Mammary epithelial cell (primary cell): ENCODE measurements at regions of chr2 and their contacts with region 1.

Region 1: DNA sequence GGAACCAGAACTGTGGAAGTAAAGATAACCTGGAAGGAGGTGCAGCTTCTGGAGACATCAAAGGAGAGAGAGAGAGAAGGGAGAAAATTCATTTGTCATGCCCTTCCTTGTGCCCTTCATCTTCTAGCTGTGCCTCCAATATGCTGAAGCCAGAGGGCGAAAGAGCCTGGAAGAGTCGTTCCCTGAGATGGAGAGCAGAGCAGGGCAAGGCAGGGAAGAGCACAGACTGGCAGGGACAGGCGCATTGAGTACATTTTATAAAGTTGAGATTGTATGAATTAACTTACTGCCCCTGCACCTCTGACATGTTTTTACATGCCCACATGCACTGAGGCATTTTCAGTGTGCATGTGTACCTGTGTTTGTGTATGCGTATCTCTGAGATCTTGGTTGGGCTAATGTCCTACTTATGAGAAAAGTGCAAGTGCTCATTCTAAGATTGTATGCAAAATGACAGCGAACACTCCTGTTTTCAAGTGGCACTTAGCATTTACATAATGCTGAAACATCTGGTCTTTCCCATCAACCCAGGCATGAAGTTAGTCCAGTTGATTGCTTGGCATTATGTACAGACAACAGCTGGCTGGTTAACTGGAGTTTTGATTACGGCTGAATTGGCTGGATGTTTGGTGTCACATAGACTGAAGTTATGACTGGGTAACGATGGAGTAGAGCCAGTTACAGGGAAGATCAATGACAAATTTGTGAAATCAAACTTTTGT is 23.7 kb upstream of the MMADHC start:
- DNase-seq: peak; percentile 20
- H3K4me3 ChIP-seq: no peak overlapping the region
- H3K27ac ChIP-seq: no peak overlapping the region
- H3K4me1 ChIP-seq: peaks cover 15% of the 10 kb centered on the region
- H3K27me3 ChIP-seq: no peaks in the 10 kb centered on the region
- CTCF ChIP-seq: peak in 1 of 2 donors; percentile 49

Region 2: DNA sequence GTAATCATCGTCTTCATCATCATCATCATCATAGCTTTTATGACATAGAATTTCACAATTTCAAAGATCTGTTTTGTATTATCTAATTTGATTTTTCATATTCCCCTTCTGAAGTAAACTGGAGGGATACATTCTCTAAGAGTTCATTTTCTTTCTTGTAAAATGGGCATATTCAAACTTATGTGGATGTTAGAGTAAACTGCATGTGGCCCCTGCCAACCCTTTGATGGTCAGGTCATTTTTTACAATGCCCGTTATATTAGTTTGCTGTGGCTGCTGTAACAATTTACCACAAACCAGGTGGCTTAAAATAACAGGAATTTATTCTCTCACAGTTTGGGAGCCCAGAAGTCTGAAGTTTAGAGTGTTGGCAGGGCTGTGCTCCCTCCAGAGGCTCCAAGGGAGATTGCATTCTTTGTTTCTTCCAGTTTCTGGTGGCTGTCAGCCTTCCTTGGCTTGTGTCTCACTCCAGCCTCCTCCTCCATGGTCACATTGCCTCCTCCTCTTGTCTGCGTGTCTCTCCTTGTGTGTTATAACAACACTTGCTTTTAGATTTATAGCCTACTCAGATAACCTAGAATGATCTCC is 103.8 kb after region 1 on chr2:
- CTCF ChIA-PET with region 1: no interaction called
- dilution Hi-C with region 1: no loop called
- in situ Hi-C with region 1: loop called (anchors 10 to 25 kb)
- intact Hi-C with region 1: loop called (anchors 2 kb)
- DNase-seq: peak; percentile 51
- H3K4me3 ChIP-seq: no peak overlapping the region
- H3K27ac ChIP-seq: no peak overlapping the region
- H3K4me1 ChIP-seq: no peaks in the 10 kb centered on the region
- H3K27me3 ChIP-seq: no peaks in the 10 kb centered on the region
- CTCF ChIP-seq: peak; percentile 58 to 80

Region 3: DNA sequence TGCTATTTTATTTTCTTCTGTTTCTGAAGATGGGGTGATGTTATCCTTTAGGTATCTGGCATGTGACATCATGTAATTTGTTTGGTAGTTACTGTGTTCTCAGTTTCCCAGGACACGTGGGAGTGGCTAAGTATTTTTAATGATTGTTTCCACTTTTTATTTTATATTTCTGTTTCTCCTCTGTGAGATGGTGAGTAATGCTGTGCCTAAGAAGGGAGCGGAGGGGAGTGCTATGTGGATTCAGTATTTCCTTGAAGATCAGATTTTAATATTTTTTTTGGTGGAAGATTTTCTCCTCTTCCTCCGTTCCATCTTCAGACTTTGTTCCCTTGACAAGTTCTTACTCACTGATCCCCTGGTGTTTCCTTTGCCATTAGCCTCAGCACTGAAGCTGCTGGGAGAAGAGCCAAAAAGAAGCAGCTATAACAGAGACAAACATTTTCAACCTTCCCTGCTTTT is 156.3 kb after region 1 on chr2:
- CTCF ChIA-PET with region 1: no interaction called
- dilution Hi-C with region 1: no loop called
- in situ Hi-C with region 1: no loop called
- intact Hi-C with region 1: loop called (anchors 5 kb)
- DNase-seq: peak; percentile 58
- H3K4me3 ChIP-seq: no peak overlapping the region
- H3K27ac ChIP-seq: peak overlapping the region; percentile 37
- H3K4me1 ChIP-seq: peaks cover 12% of the 10 kb centered on the region
- H3K27me3 ChIP-seq: no peaks in the 10 kb centered on the region
- CTCF ChIP-seq: no peak